ENCODE measurements at regions of chr7 and their contacts with region 1.

Region 1: DNA sequence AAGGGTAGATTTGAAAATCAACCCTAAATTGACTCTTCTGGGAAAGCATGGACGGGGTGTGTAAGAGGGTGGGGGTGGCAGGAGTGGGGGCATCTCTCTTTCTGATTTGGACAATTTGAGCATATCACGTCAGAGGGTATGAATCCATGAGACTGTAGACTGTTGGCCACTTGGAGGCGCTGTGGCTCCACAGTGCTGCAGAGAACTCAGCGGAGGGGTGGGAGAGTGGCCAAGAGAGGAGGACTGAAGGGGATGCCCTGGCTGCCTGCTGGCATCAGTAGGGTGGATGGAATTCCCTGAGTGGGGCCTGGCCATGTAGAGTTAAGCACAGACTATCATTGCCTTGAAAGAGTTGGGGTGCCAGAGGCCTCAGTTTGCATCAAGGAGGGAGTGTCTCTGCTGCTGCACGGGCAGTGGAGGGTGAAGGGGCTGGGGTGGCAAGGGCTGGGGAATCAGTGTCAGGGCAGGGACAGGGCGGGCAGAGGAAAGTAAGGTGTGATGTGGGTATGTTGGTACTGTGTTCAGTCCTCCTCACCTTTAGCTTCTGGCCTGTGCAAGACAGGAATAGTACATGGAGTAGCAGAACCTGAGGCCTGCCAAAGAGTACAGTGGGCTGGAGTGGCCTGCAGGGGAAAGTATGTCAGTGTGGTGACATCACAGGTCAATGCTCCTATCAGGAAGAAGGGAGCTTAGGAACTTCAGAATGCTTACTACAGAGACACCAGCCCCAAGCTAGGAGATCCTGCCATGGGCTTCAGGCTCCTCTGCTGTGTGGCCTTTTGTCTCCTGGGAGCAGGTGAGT is 133.5 kb upstream of the PRSS58 start:
- DNase-seq: peak; percentile 49 to 53 (median 50)
- ATAC-seq: peak; percentile 95
- H3K4me3 ChIP-seq: no peak overlapping the region
- H3K27ac ChIP-seq: no peak overlapping the region
- H3K4me1 ChIP-seq: no peaks in the 10 kb centered on the region
- H3K27me3 ChIP-seq: no peaks in the 10 kb centered on the region
- CTCF ChIP-seq: peak; percentile 67 to 82 (median 67)
- EP300 ChIP-seq: no peak
- POLR2A ChIP-seq: no peak
- RAD21 ChIP-seq: peak in 1 of 2 experiments; percentile 25; a peak in 1 of 4 replicates

Region 2: DNA sequence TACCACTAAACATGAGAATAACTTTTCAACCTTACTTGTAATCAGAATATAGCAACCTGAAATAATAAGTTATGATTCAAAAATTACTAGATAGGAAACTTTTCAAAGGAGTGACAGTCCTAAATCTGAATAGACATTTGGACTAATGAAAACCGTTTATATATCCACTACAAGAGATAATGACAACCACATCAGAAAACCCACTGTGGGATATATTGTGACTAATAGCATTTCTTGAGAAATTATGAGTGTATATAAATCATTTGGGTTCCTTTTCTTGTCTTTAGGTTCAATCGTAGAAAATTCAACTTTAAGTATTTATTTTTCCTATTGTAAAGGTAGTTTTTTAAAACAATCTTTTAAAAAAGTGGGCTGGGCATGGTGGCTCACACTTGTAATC is 36.7 kb after region 1 on chr7:
- CTCF ChIA-PET with region 1: no interaction called
- POLR2A ChIA-PET with region 1: no interaction called
- in situ Hi-C with region 1: no loop called
- intact Hi-C with region 1: no loop called
- DNase-seq: no peak
- ATAC-seq: no peak
- H3K4me3 ChIP-seq: no peak overlapping the region
- H3K27ac ChIP-seq: no peak overlapping the region
- H3K4me1 ChIP-seq: no peaks in the 10 kb centered on the region
- H3K27me3 ChIP-seq: peaks cover 2 to 18% of the 10 kb centered on the region in 2 experiments; a peak in 3 of 5 replicates
- CTCF ChIP-seq: no peak
- EP300 ChIP-seq: no peak
- POLR2A ChIP-seq: no peak
- RAD21 ChIP-seq: no peak

Region 3: DNA sequence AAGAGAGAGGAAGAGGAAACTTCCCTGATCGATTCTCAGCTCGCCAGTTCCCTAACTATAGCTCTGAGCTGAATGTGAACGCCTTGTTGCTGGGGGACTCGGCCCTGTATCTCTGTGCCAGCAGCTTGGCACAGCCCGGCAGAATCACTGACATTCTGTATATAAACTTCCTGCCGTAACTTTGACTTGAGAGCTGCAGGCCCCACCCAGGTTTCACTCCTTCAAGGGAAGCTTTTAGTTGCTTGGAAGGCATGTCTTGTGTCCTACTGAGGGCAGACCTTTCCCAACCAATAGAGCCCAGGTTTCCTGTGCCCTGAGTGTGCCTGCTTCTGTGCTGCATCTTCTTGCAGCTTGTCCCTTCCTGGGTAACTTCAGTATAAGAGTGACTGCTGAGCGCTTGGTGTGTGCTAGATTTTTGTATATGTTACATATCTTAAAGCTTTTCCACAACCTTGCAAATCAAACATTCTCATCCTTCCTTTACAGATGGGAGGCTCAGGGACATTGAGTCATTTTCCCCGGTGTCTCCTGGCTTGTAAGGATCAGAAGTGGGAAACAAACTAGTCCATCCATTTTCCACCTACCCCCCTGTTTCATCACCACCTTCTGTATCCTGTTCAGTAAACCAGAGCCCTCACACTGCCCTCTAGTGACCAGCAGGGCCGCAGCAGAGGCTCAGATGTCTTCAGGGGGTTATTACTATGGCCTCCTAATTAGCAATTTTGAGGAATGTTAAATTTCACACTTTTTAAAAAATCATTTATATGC is 91.7 kb after region 1 on chr7:
- CTCF ChIA-PET with region 1: no interaction called
- POLR2A ChIA-PET with region 1: no interaction called
- in situ Hi-C with region 1: no loop called
- intact Hi-C with region 1: loop called (anchors 5 kb)
- DNase-seq: peak; percentile 49 to 59 (median 54)
- ATAC-seq: peak; percentile 93
- H3K4me3 ChIP-seq: no peak overlapping the region
- H3K27ac ChIP-seq: no peak overlapping the region
- H3K4me1 ChIP-seq: no peaks in the 10 kb centered on the region
- H3K27me3 ChIP-seq: no peaks in the 10 kb centered on the region
- CTCF ChIP-seq: peak; percentile 87 to 88 (median 88)
- EP300 ChIP-seq: no peak
- POLR2A ChIP-seq: no peak
- RAD21 ChIP-seq: peak; percentile 35 to 44